Posterior vena cava (tissue), 2 donors: ENCODE measurements at regions of chr5 and their contacts with region 1.

Region 1: GRCh38 chr5:34898258-34898895 is 16.9 kb downstream of the RAD1 start:
- DNase-seq: no peak

Region 2: GRCh38 chr5:34483442-34484033 is 414.8 kb before region 1 on chr5:
- intact Hi-C with region 1: loop called (anchors 2 kb)
- DNase-seq: no peak

Region 3: DNA sequence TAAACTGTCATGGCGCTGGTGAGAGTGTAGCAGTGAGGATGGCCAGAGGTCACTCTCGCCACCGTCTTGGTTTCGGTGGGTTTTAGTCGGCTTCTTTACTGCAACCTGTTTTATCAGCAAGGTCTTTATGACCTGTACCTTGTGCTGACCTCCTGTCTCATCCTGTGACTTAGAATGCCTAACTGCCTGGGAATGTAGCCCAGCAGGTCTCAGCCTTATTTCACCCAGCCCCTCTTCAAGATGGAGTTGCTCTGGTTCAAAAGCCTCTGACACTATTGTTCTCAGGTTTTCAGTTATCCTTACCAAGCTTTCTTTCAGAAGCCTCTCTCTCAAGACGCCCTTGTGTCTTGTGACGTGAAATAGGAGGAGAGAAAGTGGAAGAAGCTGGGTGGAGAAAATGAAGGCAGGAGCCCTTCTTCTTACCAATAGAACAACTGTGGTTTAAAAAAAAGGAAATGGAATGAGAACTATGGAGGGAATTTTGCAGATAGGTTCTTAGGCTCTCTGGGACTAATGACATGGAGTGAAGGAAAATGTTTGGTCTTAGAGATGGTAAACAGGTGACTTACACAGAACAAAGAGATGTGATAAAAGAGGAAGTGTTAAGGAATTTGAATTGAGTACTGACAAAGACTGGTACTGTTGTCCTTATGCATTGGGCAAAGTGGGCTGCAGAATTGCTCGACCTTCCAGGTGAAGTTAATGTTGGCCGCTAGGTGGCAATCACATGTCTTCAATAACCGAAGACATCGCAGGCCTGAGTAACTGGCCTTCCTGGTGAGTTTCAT is 375.6 kb before region 1 on chr5:
- intact Hi-C with region 1: loop called in 1 of 2 experiments (anchors 2 kb)
- DNase-seq: no peak